B cell (primary cell): ENCODE measurements at regions of chr6 and their contacts with region 1.

Region 1: GRCh38 chr6:106979427-106979884 is 4.9 kb upstream of the CD24 start:
- DNase-seq: peak; percentile 88
- ATAC-seq: peak; percentile 25
- H3K4me3 ChIP-seq: no peak overlapping the region
- H3K4me3 Mint-ChIP-seq: no peak overlapping the region
- H3K27ac ChIP-seq: no peak overlapping the region
- H3K27ac Mint-ChIP-seq: peak overlapping the region; percentile 59
- H3K4me1 ChIP-seq: peaks cover 6 to 11% of the 10 kb centered on the region in 2 donors
- H3K4me1 Mint-ChIP-seq: peaks cover 20% of the 10 kb centered on the region
- H3K27me3 ChIP-seq: peaks cover 0 to 4% (median 0%) of the 10 kb centered on the region in 4 experiments
- H3K27me3 Mint-ChIP-seq: peaks cover 6% of the 10 kb centered on the region
- CTCF ChIP-seq: peak; percentile 98

Region 2: DNA sequence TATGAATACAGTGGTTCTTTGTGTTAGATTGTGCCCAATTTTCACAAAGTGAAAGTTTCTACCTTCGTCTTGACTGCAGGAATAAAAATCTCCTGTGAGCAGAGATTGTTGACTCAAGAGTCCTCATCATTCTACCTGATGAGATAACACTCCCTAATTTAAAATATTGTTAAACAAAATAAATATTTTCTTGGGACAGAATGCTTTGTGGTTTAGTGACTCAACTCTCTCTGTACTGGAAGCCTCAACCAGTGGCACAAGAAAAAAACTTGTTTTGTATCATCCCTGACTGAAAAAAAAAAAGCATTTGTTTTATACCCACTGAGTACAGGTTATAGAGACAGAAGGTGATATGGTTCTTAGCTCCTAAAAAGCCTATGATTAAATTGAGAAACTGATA is 540.0 kb before region 1 on chr6:
- CTCF ChIA-PET with region 1: interaction called, 74 read pairs
- POLR2A ChIA-PET with region 1: no interaction called
- intact Hi-C with region 1: no loop called
- DNase-seq: no peak
- ATAC-seq: no peak
- H3K4me3 ChIP-seq: no peak overlapping the region
- H3K4me3 Mint-ChIP-seq: no peak overlapping the region
- H3K27ac ChIP-seq: no peak overlapping the region
- H3K27ac Mint-ChIP-seq: no peak overlapping the region
- H3K4me1 ChIP-seq: peaks cover 3% of the 10 kb centered on the region in 2 donors
- H3K4me1 Mint-ChIP-seq: no peaks in the 10 kb centered on the region
- H3K27me3 ChIP-seq: peaks cover 0 to 7% (median 5%) of the 10 kb centered on the region in 4 experiments
- H3K27me3 Mint-ChIP-seq: peaks cover 38% of the 10 kb centered on the region
- CTCF ChIP-seq: no peak

Region 3: DNA sequence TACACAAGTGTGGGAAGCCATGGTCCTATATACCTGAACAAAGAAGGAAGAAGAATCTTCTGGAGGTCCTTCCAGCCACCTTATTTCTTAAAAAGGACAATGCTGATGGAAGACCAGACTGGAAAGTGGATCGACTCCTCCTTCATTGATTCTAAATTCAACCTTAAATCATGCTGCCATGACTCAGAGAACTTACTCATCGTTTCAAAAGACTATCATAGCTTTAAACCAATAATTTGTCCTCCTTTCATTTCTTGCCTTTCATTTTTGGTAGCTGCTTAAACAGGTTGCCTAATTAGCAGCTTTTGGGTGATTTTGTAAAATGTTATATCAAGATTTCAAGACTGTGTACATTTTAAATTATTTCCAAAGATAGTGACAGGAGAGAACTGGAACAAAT is 410.9 kb before region 1 on chr6:
- CTCF ChIA-PET with region 1: interaction called, 97 read pairs
- POLR2A ChIA-PET with region 1: interaction called, 4 read pairs
- intact Hi-C with region 1: loop called (anchors 2 kb)
- DNase-seq: no peak
- ATAC-seq: no peak
- H3K4me3 ChIP-seq: no peak overlapping the region
- H3K4me3 Mint-ChIP-seq: no peak overlapping the region
- H3K27ac ChIP-seq: no peak overlapping the region
- H3K27ac Mint-ChIP-seq: no peak overlapping the region
- H3K4me1 ChIP-seq: no peaks in the 10 kb centered on the region
- H3K4me1 Mint-ChIP-seq: peaks cover 14% of the 10 kb centered on the region
- H3K27me3 ChIP-seq: no peaks in the 10 kb centered on the region
- H3K27me3 Mint-ChIP-seq: no peaks in the 10 kb centered on the region
- CTCF ChIP-seq: no peak

Region 4: GRCh38 chr6:106629103-106629858 is 350.2 kb before region 1 on chr6 and contains the starts of genes QRSL1 and RTN4IP1:
- CTCF ChIA-PET with region 1: interaction called, 13 read pairs
- POLR2A ChIA-PET with region 1: no interaction called
- intact Hi-C with region 1: loop called (anchors 1 kb)
- DNase-seq: peak; percentile 96
- ATAC-seq: peak; percentile 83
- H3K4me3 ChIP-seq: peak within 1 kb of the TSS; percentile 67 to 98 (median 94)
- H3K4me3 Mint-ChIP-seq: peak within 1 kb of the TSS; percentile 98
- H3K27ac ChIP-seq: peak within 1 kb of the TSS; percentile 87 to 97
- H3K27ac Mint-ChIP-seq: peak within 1 kb of the TSS; percentile 98
- H3K4me1 ChIP-seq: peaks cover 43 to 50% of the 10 kb centered on the region in 2 donors
- H3K4me1 Mint-ChIP-seq: peaks cover 64% of the 10 kb centered on the region
- H3K27me3 ChIP-seq: no peaks in the 10 kb centered on the region
- H3K27me3 Mint-ChIP-seq: no peaks in the 10 kb centered on the region
- CTCF ChIP-seq: no peak
- total RNA-seq, gene QRSL1: 38.5 and 42.1 TPM in 2 replicates
- total RNA-seq, gene RTN4IP1: 12.1 and 13.3 TPM in 2 replicates

Region 5: GRCh38 chr6:106702451-106703110 is 276.9 kb before region 1 on chr6:
- CTCF ChIA-PET with region 1: interaction called, 8 read pairs
- POLR2A ChIA-PET with region 1: interaction called, 3 read pairs
- intact Hi-C with region 1: loop called (anchors 2 kb)
- DNase-seq: peak; percentile 82
- ATAC-seq: peak; percentile 88
- H3K4me3 ChIP-seq: peak overlapping the region; percentile 18 to 45 (median 33)
- H3K4me3 Mint-ChIP-seq: peak overlapping the region; percentile 79
- H3K27ac ChIP-seq: peak overlapping the region; percentile 90 to 94
- H3K27ac Mint-ChIP-seq: peak overlapping the region; percentile 98
- H3K4me1 ChIP-seq: peaks cover 72 to 75% of the 10 kb centered on the region in 2 donors
- H3K4me1 Mint-ChIP-seq: peaks cover 89% of the 10 kb centered on the region
- H3K27me3 ChIP-seq: no peaks in the 10 kb centered on the region
- H3K27me3 Mint-ChIP-seq: no peaks in the 10 kb centered on the region
- CTCF ChIP-seq: no peak

Region 6: DNA sequence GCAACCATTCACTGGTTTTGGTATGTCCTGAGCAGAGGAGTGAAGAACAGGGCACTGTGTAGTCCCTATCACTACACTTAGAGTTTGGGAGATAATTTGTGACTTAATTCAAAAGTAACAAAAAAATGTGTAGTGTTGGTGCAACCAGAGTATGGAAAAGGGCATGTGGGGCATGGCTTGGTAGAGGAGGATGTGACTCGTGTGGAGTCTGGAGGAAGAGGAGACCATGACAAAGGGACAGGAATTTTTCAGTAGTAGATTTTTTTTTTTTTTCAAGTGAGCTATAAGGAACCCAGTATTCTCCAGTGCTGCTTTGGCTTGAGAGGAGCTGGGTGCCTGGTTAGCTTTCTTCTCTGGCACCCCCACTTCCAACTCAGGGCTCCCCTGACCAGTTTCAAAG is 53.7 kb after region 1 on chr6:
- CTCF ChIA-PET with region 1: no interaction called
- POLR2A ChIA-PET with region 1: no interaction called
- intact Hi-C with region 1: loop called (anchors 2 kb)
- DNase-seq: no peak
- ATAC-seq: no peak
- H3K4me3 ChIP-seq: no peak overlapping the region
- H3K4me3 Mint-ChIP-seq: no peak overlapping the region
- H3K27ac ChIP-seq: no peak overlapping the region
- H3K27ac Mint-ChIP-seq: no peak overlapping the region
- H3K4me1 ChIP-seq: peaks cover 4 to 10% of the 10 kb centered on the region in 2 donors
- H3K4me1 Mint-ChIP-seq: peaks cover 20% of the 10 kb centered on the region
- H3K27me3 ChIP-seq: no peaks in the 10 kb centered on the region
- H3K27me3 Mint-ChIP-seq: no peaks in the 10 kb centered on the region
- CTCF ChIP-seq: no peak

Region 7: GRCh38 chr6:107585815-107586435 is 606.5 kb after region 1 on chr6:
- CTCF ChIA-PET with region 1: no interaction called
- POLR2A ChIA-PET with region 1: no interaction called
- intact Hi-C with region 1: no loop called
- DNase-seq: no peak
- ATAC-seq: no peak
- H3K4me3 ChIP-seq: no peak overlapping the region
- H3K4me3 Mint-ChIP-seq: no peak overlapping the region
- H3K27ac ChIP-seq: no peak overlapping the region
- H3K27ac Mint-ChIP-seq: no peak overlapping the region
- H3K4me1 ChIP-seq: no peaks in the 10 kb centered on the region
- H3K4me1 Mint-ChIP-seq: no peaks in the 10 kb centered on the region
- H3K27me3 ChIP-seq: peaks cover 0 to 2% (median 0%) of the 10 kb centered on the region in 4 experiments
- H3K27me3 Mint-ChIP-seq: no peaks in the 10 kb centered on the region
- CTCF ChIP-seq: no peak